ENCODE measurements at regions of chr3 and their contacts with region 1.

Region 1: GRCh38 chr3:112117841-112118571 is 15.0 kb downstream of the GCSAM start:
- DNase-seq: no peak
- ATAC-seq: peak; percentile 64
- H3K4me3 Mint-ChIP-seq: peak overlapping the region; percentile 15
- H3K27ac Mint-ChIP-seq: peak overlapping the region; percentile 87
- H3K4me1 Mint-ChIP-seq: peaks cover 99% of the 10 kb centered on the region
- H3K27me3 Mint-ChIP-seq: no peaks in the 10 kb centered on the region
- CTCF ChIP-seq: no peak

Region 2: GRCh38 chr3:112128843-112129727 is 11.1 kb after region 1 on chr3:
- CTCF ChIA-PET with region 1: interaction called, 5 read pairs
- POLR2A ChIA-PET with region 1: interaction called, 30 read pairs
- intact Hi-C with region 1: loop called (anchors 1 kb)
- DNase-seq: peak; percentile 39
- ATAC-seq: peak; percentile 73
- H3K4me3 Mint-ChIP-seq: peak overlapping the region; percentile 6
- H3K27ac Mint-ChIP-seq: peak overlapping the region; percentile 82
- H3K4me1 Mint-ChIP-seq: peaks cover 91% of the 10 kb centered on the region
- H3K27me3 Mint-ChIP-seq: no peaks in the 10 kb centered on the region
- CTCF ChIP-seq: no peak

Region 3: DNA sequence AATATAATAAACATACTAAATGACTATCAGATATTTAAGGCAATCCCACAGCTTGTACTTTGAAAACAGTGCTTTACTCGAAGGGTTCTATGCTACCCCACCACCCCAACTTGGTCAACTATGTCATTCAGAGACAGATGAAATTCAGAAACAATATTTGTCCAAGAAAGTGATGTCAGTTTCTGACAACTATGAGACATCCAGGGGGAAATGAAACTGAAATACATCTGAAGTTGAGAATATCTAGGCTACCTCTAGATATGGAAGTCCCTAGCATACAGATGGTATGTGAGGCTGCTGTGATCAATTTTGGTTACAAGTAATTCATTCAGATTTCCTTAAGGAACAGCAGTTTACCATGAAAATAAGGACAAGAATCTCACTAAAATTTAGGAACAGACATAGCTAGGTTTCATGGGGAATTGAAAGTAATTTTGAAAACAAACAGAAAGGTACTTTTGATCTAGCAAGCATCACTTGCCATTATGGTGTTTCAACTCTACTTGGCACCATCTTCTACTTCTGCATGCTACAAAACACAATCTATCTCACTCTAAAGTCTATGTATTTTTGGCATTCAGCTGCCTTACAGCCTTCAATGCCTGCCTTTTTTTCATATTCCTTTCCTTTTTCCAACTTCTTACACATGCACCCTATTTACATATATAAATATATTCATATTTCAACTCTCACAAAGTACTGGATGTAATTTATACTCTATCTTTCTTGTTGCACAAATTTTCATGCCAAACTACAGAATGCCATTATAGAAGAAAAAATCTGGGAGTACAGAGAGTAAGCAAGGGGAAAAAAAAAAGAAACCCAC is 422.0 kb after region 1 on chr3:
- CTCF ChIA-PET with region 1: no interaction called
- POLR2A ChIA-PET with region 1: no interaction called
- intact Hi-C with region 1: no loop called
- DNase-seq: no peak
- ATAC-seq: peak; percentile 91
- H3K4me3 Mint-ChIP-seq: peak overlapping the region; percentile 32
- H3K27ac Mint-ChIP-seq: peak overlapping the region; percentile 68
- H3K4me1 Mint-ChIP-seq: peaks cover 26% of the 10 kb centered on the region
- H3K27me3 Mint-ChIP-seq: no peaks in the 10 kb centered on the region
- CTCF ChIP-seq: no peak